HEK293 (cell line): ENCODE measurements at regions of chr1 and their contacts with region 1.

Region 1: DNA sequence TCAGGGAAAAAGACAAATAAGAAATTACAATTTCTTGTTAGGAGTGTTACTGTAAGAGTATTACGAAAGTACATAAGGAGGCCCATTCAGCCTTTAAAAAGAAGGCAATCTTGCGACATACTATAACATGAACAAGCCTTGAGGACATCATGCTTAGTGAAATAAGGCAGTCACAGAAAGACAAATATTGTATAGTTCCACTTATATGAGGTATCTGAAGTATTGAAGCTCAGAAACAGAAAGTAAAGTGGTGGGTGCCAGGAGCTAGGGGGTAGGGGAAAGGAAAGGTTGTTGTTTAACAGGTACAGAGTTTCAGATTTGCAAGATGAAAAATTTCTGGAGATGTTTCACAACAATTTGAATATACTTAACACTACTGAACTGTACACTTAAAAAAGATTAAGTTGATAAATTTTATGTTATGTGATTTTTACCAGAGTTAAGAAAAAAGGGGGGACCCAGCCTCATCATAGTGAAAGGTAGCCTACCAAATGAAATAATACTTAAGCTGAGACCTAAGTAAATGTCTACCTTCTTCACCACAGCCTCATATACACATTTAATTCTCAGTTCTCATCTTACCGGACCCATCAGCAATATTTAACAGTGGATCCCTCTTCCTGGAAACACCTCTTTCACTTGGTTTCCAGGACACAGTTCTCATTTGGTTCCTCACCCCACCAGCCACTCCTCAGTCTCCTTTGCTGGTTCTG is 19.5 kb downstream of the USP24 start:
- H3K4me3 ChIP-seq: no peak overlapping the region
- H3K27ac ChIP-seq: no peak overlapping the region
- H3K4me1 ChIP-seq: peaks cover 8% of the 10 kb centered on the region; the same call in 1 of the 2 replicates
- CTCF ChIP-seq: no peak

Region 2: DNA sequence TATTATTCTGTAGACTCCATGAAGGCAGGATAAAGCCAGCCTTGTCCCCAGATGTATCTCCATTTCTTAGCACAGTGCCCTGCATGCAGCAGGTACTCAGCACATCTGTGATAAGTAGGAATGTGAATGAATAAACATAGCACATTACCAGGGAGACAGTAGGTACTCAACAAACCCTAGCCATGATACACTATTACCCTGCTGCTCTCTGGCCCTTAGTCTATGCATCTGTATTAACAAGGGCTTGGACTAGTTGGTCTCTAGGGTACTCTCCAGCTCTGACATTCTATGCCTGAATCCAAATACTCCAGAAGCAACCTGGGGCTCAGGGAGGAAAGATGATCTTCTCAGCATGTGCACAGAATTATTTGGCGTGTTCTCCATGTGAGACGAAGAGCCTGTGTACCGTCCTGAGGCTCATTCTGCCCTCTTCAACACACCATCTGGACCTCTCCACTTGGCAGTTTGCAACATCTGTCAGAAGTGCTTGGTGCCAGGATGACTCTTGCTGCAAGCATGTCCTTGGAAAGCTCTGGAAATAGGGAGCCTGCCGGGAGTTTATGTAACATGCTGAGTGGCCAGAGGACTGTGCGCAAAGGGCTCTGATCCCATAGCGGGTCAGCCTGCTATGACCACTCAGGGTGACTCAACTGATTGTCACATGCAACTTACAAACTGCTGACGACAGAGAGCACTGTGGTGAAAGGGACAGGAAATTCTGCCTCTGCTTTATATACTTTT is 247.7 kb after region 1 on chr1:
- CTCF ChIA-PET with region 1: no interaction called
- POLR2A ChIA-PET with region 1: no interaction called
- H3K4me3 ChIP-seq: no peak overlapping the region
- H3K27ac ChIP-seq: no peak overlapping the region
- H3K4me1 ChIP-seq: no peaks in the 10 kb centered on the region
- CTCF ChIP-seq: no peak

Region 3: GRCh38 chr1:55898181-55898580 is 702.5 kb after region 1 on chr1:
- CTCF ChIA-PET with region 1: interaction called, 10 read pairs
- POLR2A ChIA-PET with region 1: no interaction called
- H3K4me3 ChIP-seq: no peak overlapping the region
- H3K27ac ChIP-seq: no peak overlapping the region
- H3K4me1 ChIP-seq: no peaks in the 10 kb centered on the region
- CTCF ChIP-seq: no peak